AG04449 (cell line): ENCODE measurements at regions of chr6 and their contacts with region 1.

Region 1: DNA sequence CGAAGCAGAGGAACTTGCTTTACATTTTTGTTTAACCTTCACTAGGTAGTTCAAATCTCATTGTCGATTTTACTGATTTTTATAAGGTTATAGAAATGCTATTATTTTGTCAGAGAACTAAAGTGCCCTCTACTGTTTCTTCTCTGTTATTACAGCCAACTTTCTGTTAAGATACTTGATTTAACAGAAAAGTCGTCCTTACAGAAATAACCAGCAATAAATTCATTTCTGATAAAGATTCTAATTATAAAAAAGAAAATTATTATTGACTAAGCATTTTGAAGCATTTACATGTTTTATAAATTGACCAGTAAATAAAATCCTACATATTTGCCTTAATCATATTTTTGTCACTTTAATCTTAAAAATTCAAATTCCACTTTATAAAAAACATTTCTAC is 60.8 kb downstream of the OGFRL1 start:
- DNase-seq: no peak
- H3K4me3 ChIP-seq: no peak overlapping the region
- CTCF ChIP-seq: peak; percentile 35

Region 2: DNA sequence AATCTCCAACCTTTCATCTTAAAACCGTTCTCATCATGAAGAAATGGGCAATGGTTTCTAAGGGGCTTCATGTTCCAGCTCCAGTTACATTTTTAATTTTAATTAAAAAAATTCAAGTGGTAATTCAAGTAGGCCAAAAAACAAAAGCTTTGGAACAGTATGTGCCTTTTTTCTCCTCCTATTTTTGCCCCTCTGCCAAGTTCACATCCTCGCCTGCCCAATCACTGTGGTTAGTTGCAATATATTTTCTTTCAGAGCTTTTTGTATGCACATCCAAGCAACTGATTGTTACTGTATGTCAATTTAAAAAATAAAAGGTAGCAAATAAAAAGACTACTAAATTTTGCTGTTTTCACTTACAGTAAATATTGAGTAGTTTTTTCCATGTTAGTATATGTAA is 292.7 kb before region 1 on chr6:
- CTCF ChIA-PET with region 1: no interaction called
- POLR2A ChIA-PET with region 1: no interaction called
- DNase-seq: no peak
- H3K4me3 ChIP-seq: no peak overlapping the region
- CTCF ChIP-seq: no peak

Region 3: DNA sequence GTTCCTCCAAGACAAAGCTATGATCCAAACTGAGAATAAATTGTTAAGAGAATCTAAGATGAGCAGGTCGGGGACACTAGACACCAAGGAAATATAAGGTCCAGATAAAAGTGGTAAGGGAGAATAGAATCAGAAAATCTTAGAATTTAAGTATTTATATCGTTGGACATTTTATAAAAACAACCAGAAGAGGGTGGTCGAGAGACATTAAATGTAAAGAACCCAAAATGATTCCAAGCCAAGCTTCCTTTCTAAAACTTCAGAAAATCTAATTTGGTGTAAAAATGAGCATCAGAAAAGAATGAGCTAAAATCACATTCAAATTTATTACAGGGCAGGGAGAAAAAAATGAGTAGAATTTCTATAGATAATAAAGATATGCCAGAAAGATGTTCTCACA is 158.6 kb before region 1 on chr6:
- CTCF ChIA-PET with region 1: interaction called, 65 read pairs
- POLR2A ChIA-PET with region 1: no interaction called
- DNase-seq: no peak
- H3K4me3 ChIP-seq: no peak overlapping the region
- CTCF ChIP-seq: no peak

Region 4: GRCh38 chr6:71364889-71365552 is 15.6 kb after region 1 on chr6:
- CTCF ChIA-PET with region 1: interaction called, 11 read pairs
- POLR2A ChIA-PET with region 1: no interaction called
- DNase-seq: no peak
- H3K4me3 ChIP-seq: no peak overlapping the region
- CTCF ChIP-seq: no peak